Cardiac septum (tissue), 1 donor: ENCODE measurements at regions of chr10 and their contacts with region 1.

Region 1: DNA sequence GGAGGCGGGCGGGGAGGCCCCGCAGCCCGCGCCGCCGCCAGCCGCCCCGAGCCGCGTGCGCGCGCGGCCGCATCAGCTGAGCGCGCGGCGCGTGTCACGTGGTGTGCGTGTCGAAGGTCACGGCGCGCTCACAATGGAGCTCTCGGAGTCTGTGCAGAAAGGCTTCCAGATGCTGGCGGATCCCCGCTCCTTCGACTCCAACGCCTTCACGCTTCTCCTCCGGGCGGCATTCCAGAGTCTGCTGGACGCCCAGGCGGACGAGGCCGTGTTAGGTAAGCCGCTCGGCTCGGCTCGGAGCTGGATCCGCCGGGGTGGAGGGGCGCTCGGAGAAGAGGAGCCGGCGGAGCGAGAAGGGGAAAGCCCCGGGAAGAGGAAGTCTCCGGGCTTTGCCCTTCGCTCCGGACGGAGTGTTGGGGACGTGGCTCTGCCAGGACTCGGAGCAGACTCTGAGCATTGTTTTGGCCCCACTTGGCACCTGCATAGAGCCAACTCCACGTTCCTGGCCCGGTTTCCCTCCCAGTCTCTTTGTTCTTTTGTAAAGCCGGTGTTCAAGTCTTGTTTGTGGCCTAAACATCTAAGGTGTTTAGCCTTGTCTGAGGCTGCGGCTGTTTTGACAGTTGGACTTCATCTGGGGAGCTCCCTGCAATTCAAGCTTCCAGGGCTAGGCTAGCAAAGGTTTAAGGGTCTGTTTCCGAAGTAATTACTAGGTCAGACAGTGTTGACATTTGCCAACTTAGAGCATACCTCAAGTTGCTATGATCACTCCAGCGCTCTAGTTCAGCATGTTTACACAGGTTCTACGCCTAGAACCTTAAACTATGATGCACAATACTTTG is at the start of gene COMMD3:
- DNase-seq: peak; percentile 96
- total RNA-seq, gene COMMD3: 71.6 TPM

Region 2: GRCh38 chr10:21516242-21517131 is 800.0 kb before region 1 on chr10:
- intact Hi-C with region 1: loop called (anchors 5 kb)
- DNase-seq: no peak

Region 3: DNA sequence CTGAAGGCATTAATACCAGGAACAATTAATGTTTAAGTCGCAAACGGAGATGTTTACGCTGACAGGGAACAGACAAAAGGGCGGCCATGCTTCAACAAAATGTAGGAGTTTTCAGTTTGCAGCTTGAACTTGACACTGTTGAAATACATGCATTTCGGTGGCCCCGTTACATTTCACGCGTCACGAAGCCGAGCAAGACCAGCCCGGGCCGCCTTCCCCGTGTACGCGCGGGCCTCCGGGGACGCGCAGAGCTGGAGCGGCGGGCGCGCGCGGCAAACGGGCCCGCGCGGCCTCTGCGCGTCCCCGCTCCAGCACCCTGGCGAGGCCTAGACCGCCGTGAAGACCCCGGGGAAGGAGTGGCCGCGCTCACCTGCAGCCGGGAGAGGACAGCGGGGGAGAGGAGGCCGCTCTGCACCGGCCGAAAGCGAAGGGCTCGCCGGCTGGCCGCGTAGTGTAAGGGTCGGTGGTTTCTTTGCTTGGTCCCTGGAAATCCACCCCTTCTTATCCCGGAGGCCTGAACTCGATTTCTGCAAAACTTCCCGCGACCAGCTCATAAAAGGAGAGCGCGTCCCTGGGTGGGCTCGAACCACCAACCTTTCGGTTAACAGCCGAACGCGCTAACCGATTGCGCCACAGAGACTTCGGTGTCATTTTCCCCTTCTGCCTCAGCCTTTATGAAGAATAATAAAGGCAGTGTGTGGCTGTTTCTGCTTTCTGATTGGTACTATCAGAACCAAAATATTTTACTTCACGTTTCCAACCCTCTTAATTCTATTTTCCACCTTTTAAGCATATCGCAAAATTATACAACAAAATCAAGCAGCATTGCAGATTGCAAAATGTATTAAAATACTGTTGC is 87.3 kb before region 1 on chr10:
- intact Hi-C with region 1: loop called (anchors 1 kb)
- DNase-seq: peak; percentile 88